ENCODE measurements at regions of chr3 and their contacts with region 1.

Region 1: GRCh38 chr3:149129326-149130205 is at the start of gene HPS3:
- DNase-seq: peak; percentile 79
- H3K4me3 Mint-ChIP-seq: peak within 1 kb of the TSS; percentile 82
- H3K27ac Mint-ChIP-seq: peak within 1 kb of the TSS; percentile 25
- H3K4me1 Mint-ChIP-seq: peaks cover 29% of the 10 kb centered on the region
- H3K27me3 Mint-ChIP-seq: peaks cover 2% of the 10 kb centered on the region
- total RNA-seq, gene HPS3: 11.5 to 13.5 TPM

Region 2: DNA sequence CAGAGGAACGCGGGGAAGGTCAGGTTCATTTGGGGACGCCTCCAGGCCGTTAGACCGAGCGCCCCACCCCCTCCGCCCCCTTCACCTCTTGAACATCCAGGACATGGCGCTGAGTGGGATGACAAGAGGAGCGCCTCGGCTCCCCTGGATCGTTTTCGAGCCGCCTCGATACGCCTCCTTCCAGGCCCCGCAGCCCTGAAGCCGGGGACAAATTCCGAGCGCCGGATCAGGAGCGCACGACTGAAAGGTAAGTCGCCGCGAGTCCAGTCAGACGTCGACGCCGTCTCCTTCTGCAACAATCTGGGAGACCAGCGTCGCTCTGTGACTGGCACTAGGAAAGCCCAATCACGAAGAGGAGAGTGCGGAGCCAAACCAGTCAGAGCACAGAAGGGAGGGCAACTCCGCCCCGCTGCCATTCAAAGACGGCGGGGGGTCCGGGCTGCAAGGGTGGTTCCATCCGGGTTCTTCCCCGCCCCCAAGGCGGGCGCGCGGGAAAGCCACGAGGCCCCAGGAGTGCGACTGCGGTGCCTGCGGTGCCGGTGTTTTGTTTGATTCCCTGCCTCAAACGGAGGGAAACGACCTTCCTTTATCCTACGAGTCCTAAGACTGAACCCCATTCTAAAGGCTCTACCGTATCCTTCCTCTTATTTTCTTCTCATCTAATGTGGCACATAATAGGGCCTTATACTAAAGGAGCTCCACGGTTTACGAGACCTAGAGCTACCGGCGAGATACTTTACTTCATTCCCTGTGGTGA is 43.2 kb before region 1 on chr3 and contains the start of gene HLTF:
- CTCF ChIA-PET with region 1: no interaction called
- intact Hi-C with region 1: loop called (anchors 1 kb)
- DNase-seq: peak; percentile 94
- H3K4me3 Mint-ChIP-seq: peak within 1 kb of the TSS; percentile 95
- H3K27ac Mint-ChIP-seq: peak within 1 kb of the TSS; percentile 67
- H3K4me1 Mint-ChIP-seq: peaks cover 14% of the 10 kb centered on the region
- H3K27me3 Mint-ChIP-seq: no peaks in the 10 kb centered on the region
- total RNA-seq, gene HLTF: 22.0 to 22.6 TPM

Region 3: DNA sequence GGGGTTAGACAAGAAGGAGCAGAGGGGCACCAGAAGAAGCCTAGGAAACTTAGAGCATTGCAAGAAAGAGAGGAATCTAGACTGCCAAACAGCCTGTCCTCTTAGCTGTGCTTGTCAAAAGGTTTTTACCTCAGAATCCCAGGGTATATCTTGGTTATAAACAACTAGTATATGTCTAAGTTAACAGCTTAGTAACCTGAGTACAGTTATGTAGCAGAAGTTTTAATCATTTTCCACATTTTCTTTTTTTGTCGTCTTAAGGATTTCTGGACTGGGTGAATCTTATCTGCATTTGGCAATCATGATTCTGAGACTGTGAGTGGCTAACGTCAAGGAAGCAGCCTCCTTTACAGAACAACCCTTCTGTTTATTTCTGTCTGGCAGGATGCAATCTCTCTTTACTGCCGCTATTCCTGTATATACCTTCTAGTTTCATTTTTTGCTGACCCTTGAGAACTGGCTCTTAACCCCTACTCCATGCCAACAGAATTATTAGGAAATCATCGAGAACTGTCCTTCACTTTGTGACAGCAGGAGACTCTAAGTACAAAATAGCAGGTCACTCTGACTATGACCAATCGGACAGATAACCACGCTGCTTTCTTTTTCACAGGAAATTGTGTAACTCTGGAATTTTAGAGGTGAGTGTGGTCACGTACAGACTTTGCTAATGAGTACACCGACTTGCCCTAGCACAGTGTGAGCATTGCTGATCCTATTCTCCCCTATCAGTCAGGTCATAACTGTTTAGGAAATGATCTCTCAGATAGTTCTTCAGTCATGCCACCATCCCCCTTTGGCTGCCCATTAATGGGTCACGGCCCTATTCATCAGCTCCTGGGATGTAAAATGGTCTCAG is 95.4 kb after region 1 on chr3:
- CTCF ChIA-PET with region 1: no interaction called
- intact Hi-C with region 1: loop called (anchors 2 kb)
- DNase-seq: peak; percentile 46
- H3K4me3 Mint-ChIP-seq: peak overlapping the region; percentile 62
- H3K27ac Mint-ChIP-seq: peak overlapping the region; percentile 17
- H3K4me1 Mint-ChIP-seq: peaks cover 21% of the 10 kb centered on the region
- H3K27me3 Mint-ChIP-seq: no peaks in the 10 kb centered on the region

Region 4: DNA sequence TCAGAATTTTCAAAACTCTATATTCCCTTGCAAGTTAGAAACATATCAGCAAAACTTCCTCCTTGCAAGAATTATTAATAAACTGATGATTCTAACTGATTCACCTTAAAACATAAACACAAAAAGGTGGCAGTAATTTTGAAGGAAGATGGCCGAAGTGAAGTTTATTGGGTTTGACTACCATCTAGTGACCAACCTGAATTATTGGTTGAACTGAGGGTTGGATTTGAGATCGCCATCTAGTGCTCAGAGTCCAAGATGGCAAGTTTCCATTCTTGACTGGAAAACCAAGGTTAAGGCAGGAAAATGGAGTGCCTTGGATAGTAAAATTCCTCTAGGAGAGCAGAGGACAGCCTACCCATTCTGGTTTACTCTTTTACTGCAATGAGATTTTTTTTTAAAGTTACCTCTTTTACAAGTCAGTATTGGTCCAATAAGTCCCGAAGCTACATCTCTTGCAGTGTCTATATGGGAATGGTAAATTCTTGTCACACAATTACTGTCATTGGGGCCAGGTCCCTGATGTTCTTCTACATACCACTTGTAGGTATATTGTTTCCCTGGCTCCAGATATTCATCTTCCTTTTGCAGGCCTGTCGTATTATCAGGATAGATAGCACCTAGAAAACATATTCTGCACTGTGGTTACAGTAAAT is 143.7 kb after region 1 on chr3:
- CTCF ChIA-PET with region 1: interaction called, 6 read pairs
- intact Hi-C with region 1: loop called (anchors 2 kb)
- DNase-seq: peak; percentile 34
- H3K4me3 Mint-ChIP-seq: no peak overlapping the region
- H3K27ac Mint-ChIP-seq: no peak overlapping the region
- H3K4me1 Mint-ChIP-seq: peaks cover 10% of the 10 kb centered on the region
- H3K27me3 Mint-ChIP-seq: no peaks in the 10 kb centered on the region